ENCODE measurements at regions of chr10 and their contacts with region 1.

Region 1: GRCh38 chr10:112314822-112315474 is 31.7 kb downstream of the TECTB start:
- DNase-seq: peak; percentile 83
- H3K4me3 Mint-ChIP-seq: no peak overlapping the region
- H3K27ac Mint-ChIP-seq: no peak overlapping the region
- H3K4me1 Mint-ChIP-seq: no peaks in the 10 kb centered on the region
- H3K27me3 Mint-ChIP-seq: no peaks in the 10 kb centered on the region
- CTCF ChIP-seq: peak; percentile 87

Region 2: DNA sequence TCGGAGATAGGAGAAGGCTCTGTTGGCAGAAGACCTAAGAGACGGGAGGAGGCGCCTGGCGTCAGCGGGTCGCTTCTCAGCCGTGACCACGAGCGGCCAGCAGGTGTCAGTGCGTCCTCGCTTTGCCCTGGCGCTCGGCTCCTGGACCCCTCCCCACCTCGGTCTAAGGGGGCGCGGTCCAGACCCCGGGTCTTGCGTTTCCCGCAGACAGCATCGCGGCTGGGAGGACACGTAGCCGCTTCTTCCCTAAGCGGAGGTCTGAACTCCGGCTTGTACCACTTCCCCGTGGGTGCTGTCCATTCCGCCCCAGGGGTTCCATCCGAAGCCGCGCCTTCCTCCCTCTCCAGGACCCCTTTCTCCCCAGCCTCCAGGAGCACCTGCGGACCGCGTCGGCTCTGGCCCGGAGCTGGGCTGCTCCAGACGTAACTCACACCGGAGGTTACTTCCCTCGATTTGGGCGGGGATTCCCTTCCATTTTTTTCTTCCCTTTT is 1238.7 kb before region 1 on chr10:
- CTCF ChIA-PET with region 1: interaction called, 5 read pairs
- POLR2A ChIA-PET with region 1: no interaction called
- intact Hi-C with region 1: loop called (anchors 10 kb)
- DNase-seq: peak; percentile 42
- H3K4me3 Mint-ChIP-seq: peak overlapping the region; percentile 69
- H3K27ac Mint-ChIP-seq: no peak overlapping the region
- H3K4me1 Mint-ChIP-seq: no peaks in the 10 kb centered on the region
- H3K27me3 Mint-ChIP-seq: peaks cover 46% of the 10 kb centered on the region
- CTCF ChIP-seq: peak; percentile 88

Region 3: GRCh38 chr10:111756217-111757061 is 558.5 kb before region 1 on chr10:
- CTCF ChIA-PET with region 1: interaction called, 6 read pairs
- POLR2A ChIA-PET with region 1: no interaction called
- intact Hi-C with region 1: loop called (anchors 2 kb)
- DNase-seq: peak; percentile 71
- H3K4me3 Mint-ChIP-seq: peak overlapping the region; percentile 26
- H3K27ac Mint-ChIP-seq: no peak overlapping the region
- H3K4me1 Mint-ChIP-seq: peaks cover 8% of the 10 kb centered on the region
- H3K27me3 Mint-ChIP-seq: peaks cover 15% of the 10 kb centered on the region
- CTCF ChIP-seq: peak; percentile 49

Region 4: GRCh38 chr10:112092502-112092901 is 222.4 kb before region 1 on chr10:
- CTCF ChIA-PET with region 1: no interaction called
- POLR2A ChIA-PET with region 1: no interaction called
- intact Hi-C with region 1: no loop called
- DNase-seq: no peak
- H3K4me3 Mint-ChIP-seq: no peak overlapping the region
- H3K27ac Mint-ChIP-seq: no peak overlapping the region
- H3K4me1 Mint-ChIP-seq: peaks cover 4% of the 10 kb centered on the region
- H3K27me3 Mint-ChIP-seq: peaks cover 21% of the 10 kb centered on the region
- CTCF ChIP-seq: no peak

Region 5: DNA sequence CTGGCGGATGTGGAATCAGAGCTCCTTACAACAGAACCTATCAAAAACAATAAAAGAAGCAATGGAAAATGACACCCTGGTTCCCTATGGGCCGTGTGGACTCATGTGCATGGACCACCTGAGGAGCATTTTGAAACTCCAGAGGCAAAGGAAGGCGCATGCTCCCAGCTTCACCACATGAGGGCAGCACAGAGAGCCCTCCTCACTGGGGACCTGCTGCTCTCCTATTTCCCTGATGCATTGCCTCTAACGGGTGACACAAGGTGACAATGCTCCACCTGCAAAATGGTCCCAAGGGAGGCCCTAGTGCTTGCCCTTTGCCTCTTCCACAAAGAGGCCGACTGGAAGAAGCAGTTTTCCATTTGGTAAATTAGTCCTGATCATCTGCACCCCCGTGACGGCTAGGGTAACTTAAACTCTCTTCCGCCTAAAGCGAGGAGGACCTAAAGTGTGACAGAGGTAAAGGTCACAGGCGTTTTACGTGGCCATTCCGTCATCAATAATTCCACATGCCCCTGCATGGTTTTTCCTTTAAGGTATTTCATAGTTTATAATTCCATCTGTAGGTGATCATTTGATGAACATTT is 199.1 kb before region 1 on chr10:
- CTCF ChIA-PET with region 1: interaction called, 8 read pairs
- POLR2A ChIA-PET with region 1: no interaction called
- intact Hi-C with region 1: loop called (anchors 2 kb)
- DNase-seq: peak; percentile 58
- H3K4me3 Mint-ChIP-seq: no peak overlapping the region
- H3K27ac Mint-ChIP-seq: no peak overlapping the region
- H3K4me1 Mint-ChIP-seq: no peaks in the 10 kb centered on the region
- H3K27me3 Mint-ChIP-seq: no peaks in the 10 kb centered on the region
- CTCF ChIP-seq: peak; percentile 67

Region 6: DNA sequence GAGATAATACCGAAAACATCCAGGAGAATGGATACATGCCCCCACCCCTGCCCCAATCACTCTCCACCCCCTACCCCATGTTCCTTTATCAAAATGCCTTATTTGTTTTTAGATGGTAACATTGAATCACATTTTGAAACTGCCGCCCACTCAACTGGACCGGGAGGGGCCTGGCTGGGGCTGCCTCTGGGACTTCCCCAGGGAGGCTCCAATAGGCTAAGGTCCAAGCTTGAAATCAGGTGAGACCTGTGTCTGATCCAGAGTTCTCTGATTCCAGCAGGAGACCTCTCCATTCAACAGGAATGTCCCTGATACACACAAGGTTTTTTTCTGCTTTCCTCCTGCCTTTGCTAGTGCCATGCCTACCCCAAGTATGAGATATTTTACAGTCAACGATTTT is 15.2 kb after region 1 on chr10:
- CTCF ChIA-PET with region 1: interaction called, 12 read pairs
- POLR2A ChIA-PET with region 1: no interaction called
- intact Hi-C with region 1: no loop called
- DNase-seq: no peak
- H3K4me3 Mint-ChIP-seq: no peak overlapping the region
- H3K27ac Mint-ChIP-seq: no peak overlapping the region
- H3K4me1 Mint-ChIP-seq: peaks cover 6% of the 10 kb centered on the region
- H3K27me3 Mint-ChIP-seq: no peaks in the 10 kb centered on the region
- CTCF ChIP-seq: no peak

Region 7: GRCh38 chr10:112490545-112490944 is 175.6 kb after region 1 on chr10:
- CTCF ChIA-PET with region 1: no interaction called
- POLR2A ChIA-PET with region 1: no interaction called
- intact Hi-C with region 1: no loop called
- DNase-seq: peak; percentile 32
- H3K4me3 Mint-ChIP-seq: no peak overlapping the region
- H3K27ac Mint-ChIP-seq: no peak overlapping the region
- H3K4me1 Mint-ChIP-seq: peaks cover 6% of the 10 kb centered on the region
- H3K27me3 Mint-ChIP-seq: no peaks in the 10 kb centered on the region
- CTCF ChIP-seq: no peak

Region 8: DNA sequence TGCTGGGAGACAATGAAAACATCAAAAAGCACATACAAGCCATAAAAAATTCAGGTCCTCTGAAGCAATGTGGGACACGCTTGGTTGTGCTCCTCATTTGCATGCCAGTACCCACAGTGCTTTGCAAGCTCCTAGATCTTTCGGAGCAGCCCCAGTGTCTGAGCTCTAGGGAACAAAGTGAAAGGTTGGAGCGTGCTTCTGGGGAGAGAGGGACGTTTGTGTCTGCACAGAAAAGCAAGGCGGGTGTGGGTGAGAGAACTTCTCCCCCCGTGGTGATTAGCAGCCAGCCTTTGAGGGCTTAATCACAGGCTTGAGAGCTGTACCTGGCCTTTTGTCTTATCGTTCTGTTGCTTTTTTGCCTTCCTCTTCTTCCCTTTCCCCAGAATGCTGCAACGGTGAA is 1161.2 kb after region 1 on chr10:
- CTCF ChIA-PET with region 1: no interaction called
- POLR2A ChIA-PET with region 1: no interaction called
- intact Hi-C with region 1: no loop called
- DNase-seq: no peak
- H3K4me3 Mint-ChIP-seq: no peak overlapping the region
- H3K27ac Mint-ChIP-seq: no peak overlapping the region
- H3K4me1 Mint-ChIP-seq: no peaks in the 10 kb centered on the region
- H3K27me3 Mint-ChIP-seq: peaks cover 33% of the 10 kb centered on the region
- CTCF ChIP-seq: no peak

Measured in MCF 10A (cell line).